ENCODE measurements at regions of chr20 and their contacts with region 1.

Region 1: DNA sequence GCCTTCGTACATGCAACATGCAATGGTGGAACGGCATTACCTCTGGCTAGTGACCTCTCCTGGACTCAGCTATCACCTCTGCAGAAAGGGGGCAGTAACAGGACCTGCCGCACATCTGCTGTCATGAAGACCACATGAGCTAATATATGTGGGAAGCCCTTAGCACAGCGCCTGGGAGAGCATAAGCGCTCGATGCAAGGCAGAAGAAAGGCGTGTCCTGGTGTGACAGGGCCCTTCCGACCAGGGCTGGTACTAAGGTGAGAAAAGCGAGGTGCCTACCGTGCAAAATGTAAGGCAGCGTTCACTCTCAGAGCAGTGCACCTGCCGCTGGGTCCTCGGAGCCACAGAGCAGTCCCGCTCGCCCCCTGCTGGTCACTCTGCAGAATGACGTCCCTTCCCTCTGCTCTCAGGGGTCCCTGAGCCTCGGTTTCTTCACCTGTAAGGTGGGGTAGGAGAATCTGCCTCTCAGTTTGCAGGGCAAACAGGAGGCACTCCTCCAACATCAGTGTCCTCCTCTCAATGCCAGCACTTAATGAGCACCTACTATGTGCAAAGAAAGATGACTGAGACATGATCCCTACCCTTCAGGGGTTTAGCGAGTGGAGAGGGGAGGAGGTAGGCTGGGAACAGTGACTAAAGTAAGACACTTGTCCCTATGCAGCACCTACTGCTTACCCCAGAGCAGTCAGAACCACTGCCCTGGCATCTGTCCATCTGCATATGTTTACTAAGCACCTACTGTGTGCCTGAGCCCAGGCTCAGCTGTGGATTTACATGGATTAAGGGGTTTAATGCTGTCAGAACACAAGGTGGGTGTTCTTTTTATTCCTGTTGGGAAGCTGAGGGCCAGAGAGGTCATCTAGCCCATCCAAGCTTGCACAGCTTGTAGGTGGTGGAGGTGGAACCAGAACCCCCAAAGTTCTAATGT is 41.1 kb upstream of the PTGIS start:
- DNase-seq: peak; percentile 81
- ATAC-seq: peak; percentile 74 to 82
- H3K4me3 ChIP-seq: peak overlapping the region; percentile 27
- H3K27ac ChIP-seq: no peak overlapping the region
- H3K4me1 ChIP-seq: peaks cover 18% of the 10 kb centered on the region
- H3K27me3 ChIP-seq: peaks cover 8% of the 10 kb centered on the region
- CTCF ChIP-seq: peak; percentile 98

Region 2: GRCh38 chr20:49541733-49542513 is 67.1 kb before region 1 on chr20:
- intact Hi-C with region 1: loop called (anchors 10 kb)
- DNase-seq: peak; percentile 67
- ATAC-seq: peak; percentile 73 to 80
- H3K4me3 ChIP-seq: no peak overlapping the region
- H3K27ac ChIP-seq: no peak overlapping the region
- H3K4me1 ChIP-seq: no peaks in the 10 kb centered on the region
- H3K27me3 ChIP-seq: no peaks in the 10 kb centered on the region
- CTCF ChIP-seq: peak; percentile 84